A673 (cell line): ENCODE measurements at regions of chrX and their contacts with region 1.

Region 1: DNA sequence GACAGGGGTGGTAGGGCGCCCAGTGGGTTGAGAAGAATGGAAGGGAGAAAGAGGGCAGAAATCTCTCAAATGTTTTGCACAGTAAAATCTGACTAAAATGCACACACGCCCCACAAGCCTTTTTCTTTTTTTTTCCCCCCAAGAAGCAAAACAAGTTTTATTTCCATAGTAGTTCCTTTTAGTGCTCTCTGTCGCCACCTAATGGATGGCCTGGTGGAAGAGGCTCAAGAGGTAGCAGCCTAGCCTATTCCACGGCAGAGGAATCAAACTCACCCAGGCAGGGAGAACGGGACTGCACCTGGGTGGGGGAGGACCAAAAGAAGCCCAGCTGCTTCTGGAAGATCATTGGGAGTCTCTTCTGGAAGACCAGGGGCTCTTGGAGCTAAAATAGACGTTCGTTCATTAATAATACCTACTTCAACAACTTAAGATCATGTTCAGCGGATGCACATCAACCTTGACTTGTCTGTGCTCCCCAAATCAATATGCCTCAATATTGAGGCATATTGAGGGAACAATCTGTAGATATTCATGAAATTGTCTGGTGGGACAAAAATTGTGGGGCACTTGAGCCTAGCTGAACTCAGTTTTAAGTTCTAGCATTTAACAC is 31.6 kb upstream of the IRAK1 start:
- DNase-seq: peak; percentile 66
- H3K4me3 ChIP-seq: no peak overlapping the region
- H3K27ac ChIP-seq: no peak overlapping the region
- H3K4me1 ChIP-seq: peaks cover 9% of the 10 kb centered on the region
- H3K27me3 ChIP-seq: no peaks in the 10 kb centered on the region
- CTCF ChIP-seq: peak; percentile 85

Region 2: DNA sequence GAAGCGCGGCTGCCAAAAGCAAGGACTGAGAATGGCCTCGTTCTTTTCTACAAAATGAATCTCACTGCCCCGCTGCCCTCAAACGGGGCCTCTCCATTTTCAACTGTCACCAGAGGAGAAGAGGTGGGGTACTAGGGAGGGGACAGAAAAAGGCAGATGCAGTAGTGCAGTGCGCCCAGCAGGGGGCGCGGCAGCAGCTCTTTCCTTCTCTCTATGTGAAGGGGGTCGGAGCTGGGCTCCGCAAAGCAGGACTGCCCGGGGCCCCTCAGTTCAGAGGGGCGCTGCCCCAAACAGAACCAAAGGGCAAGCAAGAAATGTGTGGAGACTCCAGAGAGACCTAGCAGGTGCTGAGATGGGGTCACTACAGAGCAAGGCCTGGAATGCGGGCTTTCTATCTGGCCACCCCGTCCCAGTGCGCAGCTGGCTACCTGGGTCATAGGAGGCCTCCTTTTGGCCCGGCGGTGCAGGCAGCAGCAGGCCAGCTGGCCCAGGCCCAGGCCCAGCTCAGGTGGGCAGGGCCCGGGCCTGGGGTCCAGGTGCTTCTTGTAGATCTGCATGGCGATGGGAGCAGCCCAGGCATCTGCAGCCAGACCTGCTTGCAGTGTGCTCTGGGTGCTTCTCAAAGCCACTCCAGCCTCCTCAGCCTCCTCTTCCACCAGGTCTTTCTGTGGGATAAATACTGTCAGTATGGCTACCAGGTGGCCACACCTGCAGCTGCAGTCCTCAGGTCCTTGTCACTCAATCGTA is 37.5 kb before region 1 on chrX:
- CTCF ChIA-PET with region 1: interaction called, 5 read pairs
- POLR2A ChIA-PET with region 1: no interaction called
- intact Hi-C with region 1: loop called (anchors 2 kb)
- DNase-seq: peak; percentile 65
- H3K4me3 ChIP-seq: no peak overlapping the region
- H3K27ac ChIP-seq: no peak overlapping the region
- H3K4me1 ChIP-seq: no peaks in the 10 kb centered on the region
- H3K27me3 ChIP-seq: no peaks in the 10 kb centered on the region
- CTCF ChIP-seq: peak; percentile 96

Region 3: DNA sequence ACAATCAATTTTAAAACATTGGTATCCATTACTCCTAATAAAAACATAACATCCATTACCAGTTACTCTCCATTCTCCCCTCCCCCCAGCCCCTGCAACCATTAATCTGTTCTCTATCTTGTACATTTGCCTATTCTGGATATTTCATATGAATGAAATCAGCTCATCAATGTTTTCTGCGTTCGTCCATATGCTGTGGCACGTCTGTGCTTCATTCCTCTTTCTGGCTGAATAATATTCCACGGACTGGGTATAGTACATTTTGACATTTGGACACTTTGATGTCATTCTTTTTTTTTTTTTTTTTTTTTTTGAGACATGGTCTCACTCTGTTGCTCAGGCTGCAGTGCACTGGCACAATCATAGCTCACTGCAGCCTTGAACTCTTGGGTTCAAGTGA is 352.6 kb after region 1 on chrX:
- CTCF ChIA-PET with region 1: no interaction called
- POLR2A ChIA-PET with region 1: interaction called, 10 read pairs
- intact Hi-C with region 1: no loop called
- DNase-seq: no peak
- H3K4me3 ChIP-seq: no peak overlapping the region
- H3K27ac ChIP-seq: no peak overlapping the region
- H3K4me1 ChIP-seq: no peaks in the 10 kb centered on the region
- H3K27me3 ChIP-seq: no peaks in the 10 kb centered on the region
- CTCF ChIP-seq: no peak